T-cell (primary cell): ENCODE measurements at regions of chr20 and their contacts with region 1.

Region 1: GRCh38 chr20:266596-267562 is 9.4 kb downstream of the DEFB132 start:
- DNase-seq: peak; percentile 67 to 93 (median 84)
- ATAC-seq: peak; percentile 97 to 99 (median 98)
- H3K4me3 ChIP-seq: peak overlapping the region; percentile 55 to 74
- H3K4me3 Mint-ChIP-seq: peak overlapping the region; percentile 74 to 81 (median 80)
- H3K27ac ChIP-seq: no peak overlapping the region
- H3K27ac Mint-ChIP-seq: peak overlapping the region in 1 of 2 donors; percentile 31
- H3K4me1 ChIP-seq: peaks cover 0 to 7% of the 10 kb centered on the region in 2 experiments
- H3K4me1 Mint-ChIP-seq: peaks cover 8 to 12% (median 10%) of the 10 kb centered on the region in 3 donors
- H3K27me3 ChIP-seq: peaks cover 0 to 19% of the 10 kb centered on the region in 2 experiments
- H3K27me3 Mint-ChIP-seq: peaks cover 0 to 4% of the 10 kb centered on the region in 2 donors

Region 2: DNA sequence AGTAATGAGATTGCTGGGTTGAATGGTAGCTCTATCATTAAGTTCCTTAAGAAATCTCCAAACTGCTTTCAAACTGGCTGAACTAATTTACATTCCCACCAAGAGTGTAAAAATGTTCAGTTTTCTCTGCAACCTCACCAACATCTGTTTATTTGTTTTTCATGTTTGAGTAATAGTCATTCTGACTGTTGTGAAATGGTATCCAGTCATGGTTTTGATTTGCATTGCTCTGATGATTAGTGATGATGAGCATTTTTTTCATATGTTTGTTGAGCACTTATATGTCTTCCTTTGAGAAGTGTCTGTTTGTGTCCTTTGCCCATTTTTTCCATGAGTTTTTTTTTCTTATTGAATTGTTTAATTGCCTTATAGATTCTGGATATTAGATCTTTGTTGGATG is 154.5 kb before region 1 on chr20:
- CTCF ChIA-PET with region 1: no interaction called
- POLR2A ChIA-PET with region 1: no interaction called
- DNase-seq: no peak
- ATAC-seq: no peak
- H3K4me3 ChIP-seq: no peak overlapping the region
- H3K4me3 Mint-ChIP-seq: no peak overlapping the region
- H3K27ac ChIP-seq: no peak overlapping the region
- H3K27ac Mint-ChIP-seq: no peak overlapping the region
- H3K4me1 ChIP-seq: no peaks in the 10 kb centered on the region
- H3K4me1 Mint-ChIP-seq: no peaks in the 10 kb centered on the region
- H3K27me3 ChIP-seq: peaks cover 7 to 18% of the 10 kb centered on the region in 2 experiments
- H3K27me3 Mint-ChIP-seq: peaks cover 47 to 48% of the 10 kb centered on the region in 2 donors

Region 3: DNA sequence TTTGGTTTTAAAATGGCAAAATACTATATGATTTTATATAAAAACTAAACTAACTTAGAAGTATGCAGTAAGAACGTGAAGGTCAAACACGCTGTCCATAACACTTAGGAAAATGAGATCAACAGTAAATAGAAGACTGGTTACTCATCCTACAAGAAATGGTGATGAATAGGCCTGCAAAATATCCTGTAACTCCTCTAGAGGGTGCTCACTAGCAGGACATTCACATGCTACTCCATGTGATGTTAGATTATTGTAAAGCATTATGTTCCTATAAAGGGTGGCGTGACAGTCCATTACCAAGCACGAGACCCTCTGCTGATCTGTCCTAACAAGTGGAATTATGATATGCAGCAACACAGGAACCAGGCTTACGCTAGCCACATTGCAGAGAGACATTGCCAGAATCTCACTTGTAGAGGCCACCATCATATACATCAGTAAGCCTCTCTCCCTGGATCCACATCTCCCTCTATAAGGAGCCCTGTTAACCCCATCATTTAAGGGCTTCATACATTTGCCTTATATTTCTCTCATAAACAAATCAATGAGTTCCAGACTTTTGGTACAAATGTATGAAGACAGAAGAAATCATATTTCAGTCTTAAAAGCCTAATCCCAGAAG is 57.8 kb before region 1 on chr20:
- CTCF ChIA-PET with region 1: interaction called, 5 to 10 read pairs
- POLR2A ChIA-PET with region 1: interaction called in 1 of 2 experiments, 4 read pairs
- DNase-seq: peak in 14 of 35 experiments; percentile 1 to 65 (median 10)
- ATAC-seq: peak; percentile 74 to 91 (median 83)
- H3K4me3 ChIP-seq: no peak overlapping the region
- H3K4me3 Mint-ChIP-seq: no peak overlapping the region
- H3K27ac ChIP-seq: no peak overlapping the region
- H3K27ac Mint-ChIP-seq: no peak overlapping the region
- H3K4me1 ChIP-seq: no peaks in the 10 kb centered on the region
- H3K4me1 Mint-ChIP-seq: no peaks in the 10 kb centered on the region
- H3K27me3 ChIP-seq: no peaks in the 10 kb centered on the region
- H3K27me3 Mint-ChIP-seq: peaks cover 0 to 2% of the 10 kb centered on the region in 2 donors

Region 4: GRCh38 chr20:251354-251753 is 15.5 kb before region 1 on chr20:
- CTCF ChIA-PET with region 1: no interaction called
- POLR2A ChIA-PET with region 1: interaction called in 1 of 2 experiments, 10 read pairs
- DNase-seq: no peak
- ATAC-seq: peak in 2 of 4 experiments; percentile 35 to 44
- H3K4me3 ChIP-seq: no peak overlapping the region
- H3K4me3 Mint-ChIP-seq: peak overlapping the region in 1 of 3 donors; percentile 52
- H3K27ac ChIP-seq: no peak overlapping the region
- H3K27ac Mint-ChIP-seq: no peak overlapping the region
- H3K4me1 ChIP-seq: peaks cover 0 to 12% of the 10 kb centered on the region in 2 experiments
- H3K4me1 Mint-ChIP-seq: peaks cover 6 to 19% (median 12%) of the 10 kb centered on the region in 3 donors
- H3K27me3 ChIP-seq: no peaks in the 10 kb centered on the region
- H3K27me3 Mint-ChIP-seq: peaks cover 0 to 5% of the 10 kb centered on the region in 2 donors

Region 5: DNA sequence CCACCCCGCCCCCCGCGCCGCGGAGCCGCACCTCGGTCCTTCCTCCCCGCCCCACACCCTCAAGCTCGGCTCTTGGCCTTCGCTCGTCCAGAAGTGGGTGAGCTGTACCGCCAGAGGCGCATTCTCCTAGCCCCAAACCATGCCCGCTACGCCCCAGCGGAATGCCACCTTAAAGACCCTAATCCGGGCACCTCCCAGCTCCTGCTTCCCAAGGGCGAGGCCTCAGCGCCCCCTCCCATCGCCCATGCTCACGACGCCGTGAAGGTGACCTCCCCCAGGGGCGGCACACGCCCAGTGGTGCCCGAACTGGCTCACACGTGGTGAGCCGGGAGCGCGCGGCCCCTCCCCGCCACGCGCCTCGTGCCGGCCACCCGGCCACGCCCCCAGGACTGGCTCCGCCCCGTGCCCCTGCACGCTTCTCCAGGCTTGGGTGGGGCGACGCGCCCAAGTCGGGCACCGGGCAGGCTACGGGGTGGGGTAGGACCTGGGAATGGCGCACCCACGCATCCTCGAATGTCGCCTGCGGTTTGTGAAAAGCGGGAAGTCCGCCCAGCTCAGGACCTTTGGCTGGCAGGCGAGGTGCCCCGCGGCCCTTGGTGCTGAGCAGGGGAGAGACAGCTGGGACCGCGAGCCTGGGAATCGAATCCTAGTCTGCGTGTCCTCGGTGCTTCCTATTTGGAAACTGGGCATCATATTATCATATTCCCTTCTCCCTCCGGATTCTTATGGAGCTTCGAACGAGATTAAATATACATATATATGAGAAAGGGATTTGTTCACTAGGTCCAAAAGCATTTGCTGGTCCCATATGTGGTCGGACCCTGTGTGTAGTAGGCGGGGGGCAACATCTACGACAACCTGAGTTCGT is 57.5 kb after region 1 on chr20:
- CTCF ChIA-PET with region 1: interaction called in 1 of 2 experiments, 11 read pairs
- POLR2A ChIA-PET with region 1: no interaction called
- DNase-seq: peak; percentile 61 to 92 (median 81)
- ATAC-seq: peak; percentile 58 to 62 (median 61)
- H3K4me3 ChIP-seq: peak overlapping the region; percentile 73 to 84
- H3K4me3 Mint-ChIP-seq: peak overlapping the region; percentile 84 to 90 (median 87)
- H3K27ac ChIP-seq: peak overlapping the region; percentile 62
- H3K27ac Mint-ChIP-seq: peak overlapping the region; percentile 81 to 90
- H3K4me1 ChIP-seq: peaks cover 7 to 42% of the 10 kb centered on the region in 2 experiments
- H3K4me1 Mint-ChIP-seq: peaks cover 22 to 25% (median 24%) of the 10 kb centered on the region in 3 donors
- H3K27me3 ChIP-seq: no peaks in the 10 kb centered on the region
- H3K27me3 Mint-ChIP-seq: no peaks in the 10 kb centered on the region